HEK293 (cell line): ENCODE measurements at regions of chr11 and their contacts with region 1.

Region 1: DNA sequence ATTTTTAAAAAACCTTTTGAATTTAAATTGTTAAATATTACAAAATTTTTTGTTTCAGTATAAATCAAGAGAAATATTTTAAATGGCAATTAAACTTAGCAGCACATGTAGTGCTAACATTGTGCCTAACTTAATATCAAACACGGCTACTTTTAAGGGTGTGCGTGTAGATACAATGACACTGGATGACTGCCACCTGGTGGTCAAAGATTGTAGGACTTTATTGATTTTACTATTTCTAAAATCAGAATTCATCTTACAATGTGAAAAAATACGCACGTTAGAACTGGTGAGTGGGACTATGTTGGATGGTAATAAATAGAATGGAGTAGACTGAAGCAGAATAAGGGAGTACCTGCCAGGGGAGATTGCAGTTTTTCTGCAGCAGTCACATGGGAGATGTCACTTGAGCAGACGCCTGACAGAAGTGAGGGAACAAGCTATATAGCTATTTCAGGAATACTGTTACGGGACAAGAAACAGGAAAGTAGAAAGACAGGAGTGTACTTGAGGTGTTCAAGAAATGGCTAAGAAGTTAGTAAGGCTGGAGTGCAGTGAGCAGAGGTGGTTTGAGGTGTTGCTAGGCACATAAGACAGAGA is 52.9 kb downstream of the UVRAG start:
- H3K4me3 ChIP-seq: no peak overlapping the region
- H3K27ac ChIP-seq: no peak overlapping the region
- H3K4me1 ChIP-seq: no peaks in the 10 kb centered on the region
- CTCF ChIP-seq: 0 out of 2 replicates have a peak, but pooled peaks have one; percentile 22

Region 2: DNA sequence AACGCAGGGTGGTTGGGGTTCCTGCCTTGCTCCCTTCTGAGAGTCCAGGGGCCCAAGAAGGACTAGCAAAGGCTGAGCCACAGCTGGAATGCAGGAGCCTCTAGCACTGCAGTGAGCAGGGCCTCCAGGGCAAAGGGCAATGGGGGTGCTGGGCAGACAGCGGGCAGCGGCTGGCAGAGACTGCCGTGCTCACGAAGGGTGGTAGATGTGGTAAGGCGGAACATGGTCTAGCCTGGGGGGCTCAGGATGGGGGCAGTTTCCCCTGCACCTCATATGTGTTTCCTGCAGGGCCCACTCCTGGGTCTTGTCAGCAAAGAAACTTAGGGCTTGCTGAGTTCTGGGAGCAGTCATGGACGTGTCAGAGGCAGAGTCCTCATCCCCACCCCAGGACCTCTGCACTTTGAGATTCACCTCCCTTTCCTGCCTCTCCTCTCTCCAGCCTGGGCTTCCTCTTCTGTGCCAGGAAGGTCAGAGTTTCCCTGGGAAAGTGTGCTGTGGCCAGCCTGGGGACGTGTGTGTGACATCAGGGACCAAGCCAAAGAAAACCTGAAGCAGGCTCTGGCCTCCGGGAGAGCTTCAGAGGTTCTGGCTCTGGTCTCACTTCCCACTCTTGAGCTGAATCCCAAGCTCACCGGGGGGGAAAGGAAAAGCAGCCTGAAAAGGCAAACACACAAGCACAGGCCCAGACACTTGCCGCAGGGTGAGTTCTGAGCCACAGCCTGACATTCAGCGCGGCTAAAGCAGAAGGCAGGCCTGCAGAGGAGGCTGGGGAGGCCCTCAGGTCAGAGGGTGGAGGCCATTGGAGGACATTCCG is 145.8 kb before region 1 on chr11:
- CTCF ChIA-PET with region 1: interaction called, 19 read pairs
- POLR2A ChIA-PET with region 1: no interaction called
- H3K4me3 ChIP-seq: no peak overlapping the region
- H3K27ac ChIP-seq: no peak overlapping the region
- H3K4me1 ChIP-seq: no peaks in the 10 kb centered on the region
- CTCF ChIP-seq: no peak

Region 3: GRCh38 chr11:75802913-75803820 is 64.7 kb before region 1 on chr11:
- CTCF ChIA-PET with region 1: interaction called, 63 read pairs
- POLR2A ChIA-PET with region 1: no interaction called
- H3K4me3 ChIP-seq: no peak overlapping the region
- H3K27ac ChIP-seq: no peak overlapping the region
- H3K4me1 ChIP-seq: no peaks in the 10 kb centered on the region
- CTCF ChIP-seq: peak; percentile 53

Region 4: GRCh38 chr11:75814686-75815344 is 53.1 kb before region 1 on chr11 and contains the start of gene UVRAG:
- CTCF ChIA-PET with region 1: interaction called, 17 read pairs
- POLR2A ChIA-PET with region 1: no interaction called
- H3K4me3 ChIP-seq: peak within 1 kb of the TSS; percentile 90
- H3K27ac ChIP-seq: peak within 1 kb of the TSS; percentile 67
- H3K4me1 ChIP-seq: no peaks in the 10 kb centered on the region
- CTCF ChIP-seq: no peak

Region 5: DNA sequence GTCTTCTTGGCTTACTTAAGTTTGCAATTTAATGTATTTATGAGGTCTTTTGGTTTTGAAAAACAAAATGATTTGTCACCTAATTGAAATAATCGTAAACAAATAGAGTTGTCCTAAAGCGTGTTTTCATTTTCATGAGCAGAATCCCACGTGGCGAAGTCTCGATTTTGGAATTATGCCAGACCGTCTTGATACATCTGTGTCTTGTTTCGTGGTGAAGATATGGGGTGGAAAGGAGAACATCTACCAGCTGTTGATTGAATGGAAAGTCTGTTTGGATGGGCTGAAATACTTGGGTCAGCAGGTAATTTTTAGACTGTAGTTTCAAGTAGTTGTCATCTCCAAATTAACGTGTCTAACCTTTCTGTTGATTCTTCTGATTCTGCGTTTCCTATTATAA is 11.9 kb after region 1 on chr11:
- CTCF ChIA-PET with region 1: interaction called, 11 read pairs
- POLR2A ChIA-PET with region 1: no interaction called
- H3K4me3 ChIP-seq: no peak overlapping the region
- H3K27ac ChIP-seq: no peak overlapping the region
- H3K4me1 ChIP-seq: no peaks in the 10 kb centered on the region
- CTCF ChIP-seq: no peak

Region 6: DNA sequence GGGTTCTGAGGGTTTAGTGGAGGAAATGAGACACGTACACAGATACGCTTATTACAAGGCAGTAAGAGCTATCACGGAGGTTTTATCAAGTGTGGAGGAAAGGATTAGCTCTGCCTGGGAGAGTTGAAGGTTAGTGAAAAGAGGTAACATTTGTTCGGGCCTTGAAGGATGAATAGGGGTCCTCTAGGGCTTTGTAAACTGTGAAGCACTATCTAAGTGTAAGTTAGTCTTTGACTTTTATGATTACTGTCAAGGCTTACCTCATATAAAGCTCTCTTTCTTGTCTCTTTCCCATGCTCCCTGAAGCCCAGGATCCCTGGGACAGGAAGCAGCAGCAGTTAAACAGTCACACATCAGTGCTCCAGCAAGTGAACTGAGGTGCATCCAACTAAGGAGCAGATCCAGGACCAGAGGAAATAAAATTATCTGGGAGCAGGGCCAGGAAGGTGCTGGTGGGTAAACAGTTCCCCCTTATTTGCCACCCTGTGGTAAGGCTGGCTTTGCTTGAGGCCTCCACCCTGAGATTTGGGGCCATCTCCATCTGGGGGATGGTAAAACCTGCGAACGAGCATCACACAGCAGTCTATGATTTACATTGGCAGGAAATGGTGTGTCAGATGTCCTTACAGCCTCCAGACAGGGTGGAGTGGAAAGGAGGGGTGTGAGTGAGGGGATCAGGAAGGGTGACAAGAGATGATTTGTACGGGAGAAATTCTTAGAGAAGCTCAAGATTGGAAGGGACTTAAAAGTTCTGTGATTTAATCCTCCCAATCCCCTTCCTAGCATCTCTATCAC is 540.5 kb after region 1 on chr11:
- CTCF ChIA-PET with region 1: no interaction called
- POLR2A ChIA-PET with region 1: no interaction called
- H3K4me3 ChIP-seq: no peak overlapping the region
- H3K27ac ChIP-seq: no peak overlapping the region
- H3K4me1 ChIP-seq: no peaks in the 10 kb centered on the region
- CTCF ChIP-seq: no peak